Posterior cingulate gyrus (tissue), 11 donors: ENCODE measurements at regions of chr5 and their contacts with region 1.

Region 1: GRCh38 chr5:177303121-177303924 is at the starts of genes PRELID1 and RAB24:
- DNase-seq: peak; percentile 81 to 99 (median 89)

Region 2: GRCh38 chr5:176660860-176661641 is 642.3 kb before region 1 on chr5:
- intact Hi-C with region 1: loop called (anchors 5 kb)
- DNase-seq: peak; percentile 57 to 97 (median 82)

Region 3: DNA sequence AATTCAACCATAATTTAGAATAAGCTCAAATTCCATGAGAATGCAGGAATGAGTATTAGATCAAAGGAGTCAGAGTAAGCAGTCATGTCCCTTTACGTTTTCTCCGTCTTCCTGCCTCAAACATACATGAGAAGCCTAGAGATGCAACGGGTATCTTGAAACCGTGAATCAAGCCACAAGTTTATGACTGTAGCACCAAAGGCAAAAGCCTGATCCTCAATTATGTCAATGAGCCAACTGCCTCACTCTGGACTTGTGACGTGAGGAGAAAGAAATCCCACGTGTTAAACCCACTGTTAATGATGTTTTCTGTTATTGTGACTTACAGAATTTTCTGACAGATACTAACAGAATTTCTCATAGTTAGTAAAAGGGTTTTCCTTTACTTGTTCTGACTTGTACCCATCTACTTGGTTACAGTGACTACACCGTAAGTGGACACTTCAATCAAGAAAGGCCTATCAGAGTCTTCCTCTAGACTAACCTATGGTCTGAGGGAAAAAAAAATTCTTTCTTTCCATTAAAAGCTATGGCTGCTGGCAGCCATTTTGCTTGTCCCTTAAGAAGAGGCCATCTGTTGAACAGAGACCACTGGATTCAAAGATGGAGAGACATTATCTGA is 368.9 kb before region 1 on chr5:
- intact Hi-C with region 1: no loop called
- DNase-seq: no peak

Region 4: GRCh38 chr5:177113566-177114424 is 189.5 kb before region 1 on chr5:
- intact Hi-C with region 1: loop called (anchors 2 kb)
- DNase-seq: peak; percentile 61 to 96 (median 83)

Region 5: GRCh38 chr5:177133091-177133852 is 170.1 kb before region 1 on chr5 and contains the start of gene NSD1:
- intact Hi-C with region 1: loop called (anchors 5 kb)
- DNase-seq: peak; percentile 80 to 99 (median 89)

Region 6: GRCh38 chr5:177351385-177352329 is 48.3 kb after region 1 on chr5 and contains the start of gene LMAN2:
- intact Hi-C with region 1: loop called (anchors 5 kb)
- DNase-seq: peak; percentile 91 to 99 (median 95)